ENCODE measurements at regions of chr15 and their contacts with region 1.

Region 1: GRCh38 chr15:63891079-63891767 is 57.5 kb upstream of the HERC1 start:
- DNase-seq: peak; percentile 81 to 86
- H3K4me3 ChIP-seq: no peak overlapping the region
- H3K4me3 Mint-ChIP-seq: no peak overlapping the region
- H3K27ac Mint-ChIP-seq: no peak overlapping the region
- H3K4me1 ChIP-seq: peaks cover under 1% of the 10 kb centered on the region
- H3K4me1 Mint-ChIP-seq: no peaks in the 10 kb centered on the region
- H3K27me3 ChIP-seq: no peaks in the 10 kb centered on the region
- H3K27me3 Mint-ChIP-seq: no peaks in the 10 kb centered on the region
- CTCF ChIP-seq: peak; percentile 82 to 86

Region 2: DNA sequence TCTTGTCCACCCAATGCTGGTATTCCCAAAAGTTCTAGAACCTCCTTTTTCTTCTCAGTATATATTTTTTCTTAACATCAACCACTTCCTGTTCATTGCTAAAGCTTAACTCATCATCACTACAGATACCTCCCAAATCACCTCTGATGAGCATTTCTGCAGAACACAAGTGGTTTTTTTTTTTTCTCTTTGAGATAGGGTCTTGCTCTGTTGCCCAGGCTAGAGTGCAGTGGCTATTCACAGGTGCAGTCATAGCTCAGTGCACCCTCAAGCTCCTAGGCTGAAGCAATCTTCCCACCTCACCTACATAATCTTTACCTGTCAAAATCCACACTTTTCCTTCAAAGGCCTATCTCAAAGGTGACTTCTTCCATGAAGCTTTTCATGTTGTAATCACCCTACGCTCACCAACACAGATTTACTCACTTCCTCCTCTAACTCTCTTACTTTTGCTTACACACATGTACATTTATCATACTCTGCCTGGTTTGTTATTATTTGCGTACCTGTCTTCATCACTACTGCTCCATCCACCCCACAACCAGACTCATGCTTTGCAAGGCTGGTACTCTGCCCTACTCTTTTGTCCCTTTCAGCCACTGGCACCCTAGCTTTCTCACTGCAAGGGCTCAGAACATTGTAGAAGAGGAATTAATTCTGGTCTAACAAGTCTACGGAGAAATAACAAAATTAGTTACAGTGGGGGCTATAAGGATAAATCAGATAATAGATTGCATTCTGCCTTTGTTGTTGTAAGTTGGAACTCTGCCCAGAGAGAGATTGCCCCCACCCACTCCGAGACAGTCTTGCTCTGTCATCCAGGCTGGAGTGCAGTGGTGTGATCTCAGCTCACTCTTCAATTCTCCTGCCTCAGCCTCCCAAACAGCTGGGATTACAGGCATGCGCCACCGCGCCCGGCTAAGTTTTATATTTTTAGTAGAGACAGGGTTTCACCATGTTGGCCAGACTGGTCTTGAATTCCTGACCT is 84.9 kb before region 1 on chr15:
- CTCF ChIA-PET with region 1: no interaction called
- POLR2A ChIA-PET with region 1: no interaction called
- intact Hi-C with region 1: no loop called
- DNase-seq: no peak
- H3K4me3 ChIP-seq: no peak overlapping the region
- H3K4me3 Mint-ChIP-seq: no peak overlapping the region
- H3K27ac Mint-ChIP-seq: no peak overlapping the region
- H3K4me1 ChIP-seq: no peaks in the 10 kb centered on the region
- H3K4me1 Mint-ChIP-seq: peaks cover 16% of the 10 kb centered on the region
- H3K27me3 ChIP-seq: no peaks in the 10 kb centered on the region
- H3K27me3 Mint-ChIP-seq: no peaks in the 10 kb centered on the region
- CTCF ChIP-seq: no peak

Region 3: DNA sequence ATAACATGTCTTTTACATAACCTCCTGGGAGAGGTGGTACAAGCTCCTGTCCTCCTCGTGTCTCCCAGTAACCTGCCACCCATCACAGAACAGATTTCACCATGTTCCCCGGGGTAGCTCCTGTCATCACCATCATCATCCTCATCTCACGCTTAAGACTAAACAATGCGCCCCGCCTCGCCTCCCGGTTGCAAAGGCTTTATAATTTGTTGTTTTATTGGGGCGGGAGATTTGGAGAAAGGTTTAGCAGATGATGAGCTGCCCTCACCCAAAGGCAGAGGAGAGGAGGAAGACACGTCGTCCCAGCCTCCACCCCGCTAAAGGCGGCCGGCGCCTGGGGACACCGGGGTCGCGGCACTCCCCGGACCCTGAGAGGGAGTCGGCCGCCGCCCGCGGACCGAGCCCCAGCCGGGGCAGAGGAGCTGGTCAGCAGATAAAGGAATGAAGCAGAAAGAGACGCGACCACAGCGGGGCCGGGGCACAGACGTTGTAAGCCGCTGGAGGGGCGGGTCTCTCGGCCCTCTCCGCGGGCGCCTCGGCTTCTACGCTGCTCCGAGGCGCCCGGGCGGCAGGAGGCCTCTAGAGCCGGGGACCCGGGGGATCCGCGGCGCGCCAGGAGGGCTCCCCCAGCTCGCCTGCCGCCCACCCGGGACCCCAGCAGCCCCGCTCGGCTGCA is 58.1 kb before region 1 on chr15:
- CTCF ChIA-PET with region 1: no interaction called
- POLR2A ChIA-PET with region 1: no interaction called
- intact Hi-C with region 1: loop called (anchors 1 kb)
- DNase-seq: peak; percentile 39 to 63
- H3K4me3 ChIP-seq: peak overlapping the region; percentile 80
- H3K4me3 Mint-ChIP-seq: peak overlapping the region; percentile 88
- H3K27ac Mint-ChIP-seq: peak overlapping the region; percentile 92
- H3K4me1 ChIP-seq: peaks cover 8% of the 10 kb centered on the region; the same call in 1 of the 2 replicates
- H3K4me1 Mint-ChIP-seq: peaks cover 6% of the 10 kb centered on the region
- H3K27me3 ChIP-seq: no peaks in the 10 kb centered on the region; the same call in 1 of the 2 replicates
- H3K27me3 Mint-ChIP-seq: peaks cover 2% of the 10 kb centered on the region
- CTCF ChIP-seq: no peak

Region 4: GRCh38 chr15:64050281-64051092 is 159.3 kb after region 1 on chr15:
- CTCF ChIA-PET with region 1: no interaction called
- POLR2A ChIA-PET with region 1: no interaction called
- intact Hi-C with region 1: no loop called
- DNase-seq: peak; percentile 29 to 49
- H3K4me3 ChIP-seq: no peak overlapping the region
- H3K4me3 Mint-ChIP-seq: no peak overlapping the region
- H3K27ac Mint-ChIP-seq: no peak overlapping the region
- H3K4me1 ChIP-seq: peaks cover 20% of the 10 kb centered on the region
- H3K4me1 Mint-ChIP-seq: peaks cover 17% of the 10 kb centered on the region
- H3K27me3 ChIP-seq: no peaks in the 10 kb centered on the region
- H3K27me3 Mint-ChIP-seq: no peaks in the 10 kb centered on the region
- CTCF ChIP-seq: no peak

Region 5: DNA sequence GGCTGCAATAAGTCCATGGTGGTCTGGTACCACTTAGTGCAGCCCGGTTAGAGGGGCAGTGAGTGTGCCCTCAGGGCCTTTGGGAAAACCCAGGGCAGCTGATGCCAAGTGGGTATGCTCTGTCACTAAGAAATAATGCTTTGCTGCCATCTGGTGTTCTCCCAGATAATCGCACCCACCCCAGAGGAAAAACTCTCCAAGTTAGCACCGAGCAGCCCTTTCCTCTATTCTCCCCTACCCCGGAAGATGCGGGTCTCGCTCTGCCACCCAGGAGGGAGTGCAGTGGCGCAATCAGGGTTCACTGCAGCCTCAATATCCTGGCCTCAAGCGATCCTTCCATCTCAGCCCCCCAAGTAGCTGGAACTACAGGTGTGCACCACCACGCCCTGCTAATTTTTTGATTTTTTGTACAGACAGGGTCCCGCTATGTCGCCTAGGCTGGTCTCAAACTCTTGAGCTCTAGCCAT is 176.4 kb after region 1 on chr15:
- CTCF ChIA-PET with region 1: no interaction called
- POLR2A ChIA-PET with region 1: no interaction called
- intact Hi-C with region 1: loop called (anchors 2 kb)
- DNase-seq: peak; percentile 58 to 77
- H3K4me3 ChIP-seq: no peak overlapping the region
- H3K4me3 Mint-ChIP-seq: no peak overlapping the region
- H3K27ac Mint-ChIP-seq: no peak overlapping the region
- H3K4me1 ChIP-seq: peaks cover 19% of the 10 kb centered on the region
- H3K4me1 Mint-ChIP-seq: peaks cover 5% of the 10 kb centered on the region
- H3K27me3 ChIP-seq: no peaks in the 10 kb centered on the region
- H3K27me3 Mint-ChIP-seq: no peaks in the 10 kb centered on the region
- CTCF ChIP-seq: peak; percentile 66 to 77

Measured in Caco-2 (cell line).